Esophagus squamous epithelium (tissue), 5 donors: ENCODE measurements at regions of chr6 and their contacts with region 1.

Region 1: GRCh38 chr6:153023977-153024708 is 21.6 kb upstream of the MTRF1L start:
- DNase-seq: no peak
- H3K4me3 ChIP-seq: no peak overlapping the region
- H3K27ac ChIP-seq: no peak overlapping the region
- H3K4me1 ChIP-seq: peaks cover 0 to 5% (median 0%) of the 10 kb centered on the region in 3 donors
- H3K27me3 ChIP-seq: peaks cover 0 to 3% (median 0%) of the 10 kb centered on the region in 4 donors
- CTCF ChIP-seq: peak in 5 of 6 experiments; percentile 65 to 79 (median 76)
- POLR2A ChIP-seq: no peak

Region 2: DNA sequence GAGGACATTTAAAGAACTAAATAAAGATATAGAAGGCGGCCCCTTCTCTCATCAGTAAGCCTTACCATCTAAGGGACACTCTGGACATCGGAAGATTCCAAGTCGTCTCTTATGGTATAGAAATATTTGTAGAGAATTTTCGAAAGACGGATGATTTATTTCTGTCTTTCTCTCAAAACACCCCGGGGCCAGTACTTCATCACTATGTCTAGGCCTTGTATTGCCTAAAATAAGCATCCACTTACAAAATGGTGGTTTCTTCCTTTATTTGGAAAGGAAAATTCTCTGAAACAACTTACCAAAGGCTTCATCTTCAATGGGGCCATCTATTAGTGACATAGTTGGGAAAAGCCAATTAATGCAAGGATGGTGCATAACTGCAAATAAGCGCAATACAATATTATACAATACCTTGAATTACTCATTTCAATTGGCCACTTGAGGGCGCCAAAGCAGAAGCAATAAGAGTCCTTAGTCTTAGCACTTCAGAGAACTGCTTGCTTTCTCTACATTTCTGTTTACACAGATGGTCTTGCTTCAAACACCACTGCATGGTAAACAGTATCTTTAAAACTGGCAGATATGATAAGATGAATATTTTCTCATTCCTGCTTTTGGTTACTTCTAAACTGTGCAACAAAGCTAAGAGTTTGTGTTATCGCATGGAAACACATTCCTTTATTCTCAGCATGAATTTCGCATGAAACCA is 160.4 kb before region 1 on chr6:
- intact Hi-C with region 1: loop called (anchors 10 kb)
- DNase-seq: no peak
- H3K4me3 ChIP-seq: no peak overlapping the region
- H3K27ac ChIP-seq: no peak overlapping the region
- H3K4me1 ChIP-seq: no peaks in the 10 kb centered on the region
- H3K27me3 ChIP-seq: no peaks in the 10 kb centered on the region
- CTCF ChIP-seq: peak; percentile 44 to 72 (median 54)
- POLR2A ChIP-seq: no peak

Region 3: GRCh38 chr6:152897799-152898399 is 126.2 kb before region 1 on chr6:
- intact Hi-C with region 1: no loop called
- DNase-seq: no peak
- H3K4me3 ChIP-seq: no peak overlapping the region
- H3K27ac ChIP-seq: no peak overlapping the region
- H3K4me1 ChIP-seq: no peaks in the 10 kb centered on the region
- H3K27me3 ChIP-seq: no peaks in the 10 kb centered on the region
- CTCF ChIP-seq: peak in 5 of 6 experiments; percentile 44 to 72 (median 58)
- POLR2A ChIP-seq: no peak

Region 4: DNA sequence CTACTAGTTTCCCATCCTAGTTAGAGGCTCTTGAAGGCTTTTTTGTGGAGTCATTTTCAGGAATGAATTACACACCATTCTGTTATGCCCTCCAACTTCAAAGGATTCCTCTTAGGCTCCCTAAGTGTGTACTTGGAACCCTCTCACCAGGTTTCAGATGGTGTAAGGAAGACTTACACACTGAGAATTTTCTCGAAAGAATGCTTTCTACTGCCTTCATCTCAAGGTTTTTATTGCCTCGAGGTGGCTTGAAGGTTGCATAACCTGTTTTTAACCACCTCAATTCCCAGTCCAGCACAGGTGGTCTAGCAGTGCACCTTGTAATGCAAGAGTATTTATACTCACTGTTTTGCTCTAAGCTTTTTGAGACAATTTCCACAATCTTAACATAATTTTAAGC is 218.6 kb after region 1 on chr6:
- intact Hi-C with region 1: no loop called
- DNase-seq: no peak
- H3K4me3 ChIP-seq: no peak overlapping the region
- H3K27ac ChIP-seq: no peak overlapping the region
- H3K4me1 ChIP-seq: no peaks in the 10 kb centered on the region
- H3K27me3 ChIP-seq: no peaks in the 10 kb centered on the region
- CTCF ChIP-seq: no peak
- POLR2A ChIP-seq: no peak